ENCODE measurements at regions of chr5 and their contacts with region 1.

Region 1: DNA sequence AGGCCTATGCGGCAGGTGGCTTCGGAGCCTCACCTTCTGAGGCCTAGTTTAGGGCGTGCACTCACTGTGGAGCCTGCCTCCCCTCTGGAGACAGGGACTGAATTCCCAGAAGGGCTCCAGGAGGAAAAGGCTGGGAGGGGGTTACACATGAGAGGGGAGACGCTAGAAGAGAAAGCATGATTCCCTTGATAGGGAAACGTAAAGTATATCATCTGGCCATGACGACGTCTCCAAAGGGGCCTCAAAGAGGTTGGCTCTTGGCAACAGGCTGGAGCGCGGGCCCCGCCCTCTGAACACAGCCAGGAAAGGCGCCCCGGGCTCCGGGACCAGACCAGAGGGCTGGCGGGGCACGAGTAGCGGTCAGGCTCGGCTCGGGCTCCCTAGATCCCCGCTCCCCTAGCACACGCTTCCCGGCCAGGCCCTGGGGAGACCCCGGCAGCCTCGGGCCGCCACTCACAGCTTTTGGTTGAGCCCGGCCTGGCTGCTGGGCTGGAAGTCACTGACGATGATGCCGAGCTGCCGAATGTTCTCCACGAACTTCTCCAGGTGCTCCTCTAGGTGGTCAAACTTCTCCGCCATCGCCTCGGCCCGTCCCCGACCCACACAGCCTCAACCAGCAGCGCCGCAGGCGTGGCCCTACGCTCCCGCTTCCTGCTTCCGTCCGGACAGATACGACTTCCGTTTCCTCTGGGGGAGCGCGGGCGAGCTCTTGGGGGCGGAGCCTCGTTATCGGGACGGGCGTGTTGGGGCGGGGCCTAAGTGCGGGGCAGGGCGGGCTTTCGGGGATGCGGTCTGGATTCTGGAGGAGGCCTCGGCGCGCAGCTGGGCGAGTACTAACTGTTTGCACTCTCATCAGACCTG is at the start of gene MED10:
- DNase-seq: peak; percentile 98
- H3K4me3 Mint-ChIP-seq: peak within 1 kb of the TSS; percentile 92
- H3K27ac Mint-ChIP-seq: peak within 1 kb of the TSS; percentile 98
- H3K4me1 Mint-ChIP-seq: peaks cover 37% of the 10 kb centered on the region
- H3K27me3 Mint-ChIP-seq: no peaks in the 10 kb centered on the region
- total RNA-seq, gene MED10: 49.8 to 51.6 TPM

Region 2: GRCh38 chr5:5965132-5965531 is 413.0 kb before region 1 on chr5:
- CTCF ChIA-PET with region 1: no interaction called
- POLR2A ChIA-PET with region 1: no interaction called
- intact Hi-C with region 1: no loop called
- DNase-seq: no peak
- H3K4me3 Mint-ChIP-seq: no peak overlapping the region
- H3K27ac Mint-ChIP-seq: no peak overlapping the region
- H3K4me1 Mint-ChIP-seq: no peaks in the 10 kb centered on the region
- H3K27me3 Mint-ChIP-seq: peaks cover 2% of the 10 kb centered on the region

Region 3: GRCh38 chr5:6261668-6262067 is 116.5 kb before region 1 on chr5:
- CTCF ChIA-PET with region 1: no interaction called
- POLR2A ChIA-PET with region 1: no interaction called
- intact Hi-C with region 1: loop called (anchors 5 kb)
- DNase-seq: no peak
- H3K4me3 Mint-ChIP-seq: no peak overlapping the region
- H3K27ac Mint-ChIP-seq: peak overlapping the region; percentile 75
- H3K4me1 Mint-ChIP-seq: peaks cover 15% of the 10 kb centered on the region
- H3K27me3 Mint-ChIP-seq: peaks cover 2% of the 10 kb centered on the region

Region 4: DNA sequence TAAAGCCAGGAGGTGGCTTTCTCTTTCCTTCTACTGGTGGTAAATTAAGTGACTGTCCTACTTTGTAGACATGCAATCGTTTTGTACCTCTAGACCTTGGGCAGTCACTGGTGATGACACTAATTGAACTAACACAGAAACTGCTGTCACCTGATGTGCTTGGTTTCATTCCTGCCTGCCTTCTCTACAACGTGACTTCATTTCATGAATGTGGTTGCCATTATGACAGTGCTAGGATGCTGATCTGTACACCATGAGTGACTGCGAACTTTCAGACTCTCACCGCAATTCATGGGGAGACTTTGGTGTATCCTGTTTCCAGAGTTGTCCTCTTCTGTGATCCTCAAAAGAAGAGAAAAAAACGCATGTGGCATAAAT is 118.1 kb after region 1 on chr5:
- CTCF ChIA-PET with region 1: no interaction called
- POLR2A ChIA-PET with region 1: no interaction called
- intact Hi-C with region 1: loop called (anchors 2 kb)
- DNase-seq: peak; percentile 53
- H3K4me3 Mint-ChIP-seq: no peak overlapping the region
- H3K27ac Mint-ChIP-seq: no peak overlapping the region
- H3K4me1 Mint-ChIP-seq: peaks cover 12% of the 10 kb centered on the region
- H3K27me3 Mint-ChIP-seq: peaks cover 20% of the 10 kb centered on the region

Region 5: DNA sequence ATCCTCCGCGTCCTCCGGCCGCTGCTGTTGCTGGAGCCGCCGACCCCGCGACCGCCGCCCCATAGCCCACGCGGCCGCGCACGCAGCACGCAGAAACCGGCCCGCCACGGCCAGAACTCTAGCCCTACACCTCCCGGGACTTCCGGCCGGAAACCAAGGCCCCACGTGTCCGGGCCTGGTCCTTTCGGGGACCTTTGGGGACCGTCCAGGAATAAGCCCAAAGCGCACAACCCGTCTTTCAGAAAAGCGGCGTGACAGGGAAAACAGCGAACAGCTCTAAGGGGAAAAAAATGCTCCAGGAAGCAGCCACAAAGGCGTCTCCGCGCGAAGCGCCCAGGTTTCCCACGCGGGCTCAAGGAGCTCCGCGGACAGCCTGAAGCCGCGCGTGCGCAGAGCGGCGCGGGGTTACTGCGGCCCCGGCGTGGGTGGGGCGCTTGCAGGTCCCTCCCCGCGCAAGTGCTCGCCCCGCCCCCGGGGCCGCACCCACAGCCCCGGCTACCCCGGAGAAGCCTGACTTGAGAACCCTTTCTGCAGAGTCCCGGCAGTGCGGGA is 254.9 kb after region 1 on chr5 and contains the starts of genes NSUN2 and SRD5A1:
- CTCF ChIA-PET with region 1: no interaction called
- POLR2A ChIA-PET with region 1: interaction called, 4 read pairs
- intact Hi-C with region 1: loop called (anchors 1 kb)
- DNase-seq: peak; percentile 92
- H3K4me3 Mint-ChIP-seq: peak within 1 kb of the TSS; percentile 97
- H3K27ac Mint-ChIP-seq: peak within 1 kb of the TSS; percentile 95
- H3K4me1 Mint-ChIP-seq: peaks cover 40% of the 10 kb centered on the region
- H3K27me3 Mint-ChIP-seq: no peaks in the 10 kb centered on the region
- total RNA-seq, gene NSUN2: 78.5 to 86.7 TPM
- total RNA-seq, gene SRD5A1: 9.5 to 11.0 TPM

Measured in activated CD4-positive, alpha-beta memory T cell treated with anti-CD3 and anti-CD28 coated beads for 36 hours (primary cell).